Activated T-helper 1 cell treated with anti-CD3 and anti-CD28 coated beads, Interleukin-12 subunit alpha, Interleukin-12 subunit beta, Interleukin-2, Interleukin-4 antibody, amounts not matched to agents 30 ng/mL and 10 ng/mL and 1 ng/mL, durations not matched to agents 14 hours and 24 hours and 36 hours (primary cell): ENCODE measurements at regions of chr3 and their contacts with region 1.

Region 1: DNA sequence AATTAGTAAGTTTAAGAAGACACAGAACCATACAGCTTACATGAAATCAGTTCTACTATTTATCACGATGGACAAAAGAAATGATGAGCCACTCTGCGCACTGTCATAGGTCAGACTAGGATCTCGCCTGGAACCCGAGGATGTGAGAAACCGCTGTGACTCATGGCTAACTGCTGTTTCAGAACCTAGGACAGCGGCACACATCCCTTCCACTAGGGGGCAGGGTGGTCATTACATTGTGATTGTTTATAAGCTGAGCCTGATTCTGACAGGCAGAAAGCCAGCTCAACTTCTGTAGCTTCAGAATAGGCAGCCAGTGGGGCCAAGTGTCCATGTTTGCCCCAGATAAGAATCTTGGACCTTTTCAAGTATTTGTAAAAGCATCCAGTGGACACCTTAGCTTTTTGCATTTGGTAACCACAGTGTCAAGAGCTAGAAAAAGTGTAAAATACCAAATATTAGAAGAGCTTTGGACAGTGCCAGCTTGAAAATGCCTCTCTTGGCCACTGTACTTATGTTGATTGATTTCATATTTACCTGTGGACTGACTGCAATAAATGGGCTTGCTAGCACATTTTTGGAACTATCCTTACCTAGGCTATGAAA is 115.8 kb downstream of the KBTBD8 start:
- DNase-seq: peak; percentile 65
- H3K4me3 Mint-ChIP-seq: no peak overlapping the region
- H3K27ac Mint-ChIP-seq: no peak overlapping the region
- H3K4me1 Mint-ChIP-seq: peaks cover 7% of the 10 kb centered on the region
- H3K27me3 Mint-ChIP-seq: no peaks in the 10 kb centered on the region

Region 2: GRCh38 chr3:66998113-66998903 is 115.6 kb before region 1 on chr3 and contains the start of gene KBTBD8:
- intact Hi-C with region 1: loop called (anchors 1 kb)
- DNase-seq: peak; percentile 97
- H3K4me3 Mint-ChIP-seq: peak within 1 kb of the TSS; percentile 95
- H3K27ac Mint-ChIP-seq: peak within 1 kb of the TSS; percentile 88
- H3K4me1 Mint-ChIP-seq: peaks cover 36% of the 10 kb centered on the region
- H3K27me3 Mint-ChIP-seq: peaks cover 10% of the 10 kb centered on the region
- total RNA-seq, gene KBTBD8: 18.3 and 26.6 TPM in 2 replicates

Region 3: GRCh38 chr3:67048067-67048714 is 65.7 kb before region 1 on chr3:
- intact Hi-C with region 1: no loop called
- DNase-seq: no peak
- H3K4me3 Mint-ChIP-seq: no peak overlapping the region
- H3K27ac Mint-ChIP-seq: no peak overlapping the region
- H3K4me1 Mint-ChIP-seq: no peaks in the 10 kb centered on the region
- H3K27me3 Mint-ChIP-seq: peaks cover 4% of the 10 kb centered on the region

Region 4: DNA sequence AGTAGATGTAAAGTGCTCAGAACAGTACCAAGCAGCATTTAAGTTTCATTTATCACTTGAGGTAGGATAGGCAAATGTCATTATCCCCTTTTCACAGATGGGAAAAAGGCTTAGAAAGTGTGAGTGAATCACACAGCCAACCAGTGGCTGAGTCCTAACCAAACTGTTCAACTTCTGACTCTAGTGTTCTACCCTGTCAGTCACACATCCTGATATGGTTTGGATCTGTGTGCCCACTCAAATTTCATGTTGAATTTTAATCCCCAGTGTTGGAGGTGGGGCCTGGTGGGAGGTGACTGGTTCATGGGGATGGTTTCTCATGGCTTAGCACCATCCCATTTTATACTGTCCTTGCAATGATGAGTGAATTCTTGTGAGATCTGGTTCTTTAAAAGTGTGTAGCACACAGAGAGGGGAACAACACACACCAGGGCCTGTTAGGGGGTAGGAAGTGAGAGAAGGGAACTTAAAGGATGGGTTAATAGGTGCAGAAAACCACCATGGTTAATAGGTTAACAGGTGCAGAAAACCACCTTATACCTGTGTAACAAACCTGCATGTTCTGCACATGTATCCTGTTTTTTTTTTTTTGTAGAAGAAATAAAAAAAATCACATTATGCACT is 235.8 kb after region 1 on chr3:
- intact Hi-C with region 1: loop called (anchors 2 kb)
- DNase-seq: no peak
- H3K4me3 Mint-ChIP-seq: no peak overlapping the region
- H3K27ac Mint-ChIP-seq: peak overlapping the region; percentile 3
- H3K4me1 Mint-ChIP-seq: peaks cover 14% of the 10 kb centered on the region
- H3K27me3 Mint-ChIP-seq: peaks cover 3% of the 10 kb centered on the region

Region 5: DNA sequence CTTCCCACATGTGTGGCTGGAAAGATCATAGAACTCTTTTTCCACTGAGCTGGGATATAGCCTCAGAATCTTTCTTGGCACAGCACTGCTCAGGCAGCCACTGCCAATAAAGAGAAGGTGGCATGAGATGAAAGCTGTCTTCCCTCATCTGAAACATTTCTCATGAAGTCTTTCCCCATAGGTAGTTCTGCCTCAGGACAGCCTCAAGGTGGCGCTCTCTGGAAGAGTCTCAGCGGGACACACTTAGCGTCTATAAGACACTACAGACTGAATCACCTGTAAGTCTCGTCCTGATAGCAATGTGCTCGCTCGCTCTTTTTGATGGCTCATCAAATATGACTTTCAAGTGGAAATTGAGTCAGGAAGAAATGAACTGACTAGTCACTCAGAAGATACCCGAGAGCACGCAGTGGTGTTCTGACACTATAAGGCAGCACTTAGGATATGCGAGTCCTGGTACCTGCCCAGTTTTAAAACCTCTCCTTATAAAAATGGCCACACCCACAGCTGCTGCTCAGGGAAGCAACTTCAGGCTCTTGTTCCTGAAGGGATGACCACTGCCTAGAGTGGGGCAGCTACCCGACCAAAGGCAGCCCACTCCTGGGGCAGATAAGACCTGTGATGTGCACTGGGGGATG is 271.0 kb after region 1 on chr3:
- intact Hi-C with region 1: loop called (anchors 2 kb)
- DNase-seq: no peak
- H3K4me3 Mint-ChIP-seq: no peak overlapping the region
- H3K27ac Mint-ChIP-seq: no peak overlapping the region
- H3K4me1 Mint-ChIP-seq: peaks cover 25% of the 10 kb centered on the region
- H3K27me3 Mint-ChIP-seq: no peaks in the 10 kb centered on the region

Region 6: GRCh38 chr3:67790043-67790442 is 676.1 kb after region 1 on chr3:
- intact Hi-C with region 1: loop called (anchors 1 kb)
- DNase-seq: peak; percentile 33
- H3K4me3 Mint-ChIP-seq: no peak overlapping the region
- H3K27ac Mint-ChIP-seq: no peak overlapping the region
- H3K4me1 Mint-ChIP-seq: no peaks in the 10 kb centered on the region
- H3K27me3 Mint-ChIP-seq: no peaks in the 10 kb centered on the region

Region 7: DNA sequence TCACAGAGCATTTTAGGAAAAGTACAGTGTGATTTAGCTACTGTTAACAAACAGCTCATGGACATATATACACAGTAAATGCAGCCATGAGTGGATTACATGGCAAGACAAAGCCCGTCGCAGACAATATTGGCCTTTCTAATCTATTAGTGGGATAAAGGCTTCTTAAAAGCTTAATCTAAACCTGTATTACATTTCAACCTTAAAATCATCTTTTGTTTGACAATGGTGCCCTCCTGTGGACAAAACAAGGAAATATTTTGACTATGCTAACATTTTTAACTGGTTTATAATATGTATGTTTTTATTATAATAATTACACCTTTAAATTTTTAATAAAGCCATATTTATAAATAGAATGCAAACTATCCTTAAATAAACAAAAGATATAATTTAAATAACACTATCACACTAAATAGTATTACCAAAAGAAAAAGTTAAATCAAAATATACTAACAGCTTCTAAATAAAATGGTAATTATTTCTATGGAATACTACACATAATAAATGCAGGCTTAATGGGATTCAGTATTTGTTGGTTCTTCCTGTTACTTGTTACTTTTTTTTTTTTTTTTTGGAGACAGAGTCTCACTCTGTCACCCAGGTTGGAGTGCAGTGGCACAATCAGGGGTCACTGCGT is 1779.8 kb after region 1 on chr3:
- intact Hi-C with region 1: loop called (anchors 5 kb)
- DNase-seq: no peak
- H3K4me3 Mint-ChIP-seq: no peak overlapping the region
- H3K27ac Mint-ChIP-seq: no peak overlapping the region
- H3K4me1 Mint-ChIP-seq: no peaks in the 10 kb centered on the region
- H3K27me3 Mint-ChIP-seq: peaks cover 19% of the 10 kb centered on the region